Activated B cell treated with CpG ODN at 0.5 μM for 24 hours (primary cell): ENCODE measurements at regions of chr9 and their contacts with region 1.

Region 1: DNA sequence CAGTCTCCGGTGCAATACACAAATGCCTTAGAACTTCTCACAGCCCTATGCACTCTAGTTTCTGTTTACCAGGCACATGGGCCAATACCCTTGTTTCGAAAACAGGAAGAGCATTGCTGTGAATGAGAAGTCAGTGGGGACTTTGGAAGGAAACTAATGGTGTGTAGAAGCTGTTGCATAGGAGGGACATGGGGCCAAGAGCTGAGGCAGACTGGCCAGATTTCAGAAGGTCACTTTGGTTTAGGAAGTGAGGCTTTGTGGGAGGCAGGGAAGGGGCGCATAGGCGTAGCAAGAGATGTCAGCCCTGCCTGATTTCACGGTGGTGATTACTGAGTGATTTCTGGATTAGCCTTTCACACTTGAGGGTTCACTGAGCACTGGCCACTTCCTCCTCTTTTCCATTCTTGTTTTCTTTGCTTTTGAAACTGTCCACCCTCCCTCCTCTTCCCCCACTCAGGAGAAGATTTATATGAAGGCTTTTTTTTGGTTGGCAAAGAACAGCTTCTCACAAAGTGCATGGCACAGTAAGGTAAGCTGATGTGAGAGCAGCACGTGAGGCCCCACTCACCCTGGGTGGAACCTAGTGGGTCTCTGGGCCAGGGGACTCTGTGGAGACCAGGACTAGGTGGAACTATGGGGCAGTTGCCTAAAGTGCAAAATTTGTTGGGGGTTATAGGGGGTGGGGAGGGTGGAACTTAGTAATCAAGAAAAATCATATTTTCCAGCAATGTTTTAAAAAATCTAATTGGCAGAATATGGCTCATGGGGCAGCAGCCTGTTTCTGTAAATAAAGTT is 6.1 kb upstream of the TMEM252 start:
- DNase-seq: peak; percentile 20
- ATAC-seq: peak; percentile 83
- H3K4me3 Mint-ChIP-seq: peak overlapping the region; percentile 66
- H3K27ac Mint-ChIP-seq: peak overlapping the region; percentile 84
- H3K4me1 Mint-ChIP-seq: peaks cover 42% of the 10 kb centered on the region
- H3K27me3 Mint-ChIP-seq: no peaks in the 10 kb centered on the region
- CTCF ChIP-seq: no peak

Region 2: GRCh38 chr9:68507130-68507805 is 39.5 kb before region 1 on chr9:
- CTCF ChIA-PET with region 1: interaction called, 5 read pairs
- POLR2A ChIA-PET with region 1: no interaction called
- intact Hi-C with region 1: loop called (anchors 5 kb)
- DNase-seq: no peak
- ATAC-seq: no peak
- H3K4me3 Mint-ChIP-seq: no peak overlapping the region
- H3K27ac Mint-ChIP-seq: no peak overlapping the region
- H3K4me1 Mint-ChIP-seq: peaks cover 12% of the 10 kb centered on the region
- H3K27me3 Mint-ChIP-seq: no peaks in the 10 kb centered on the region
- CTCF ChIP-seq: no peak

Region 3: GRCh38 chr9:68530618-68531017 is 16.2 kb before region 1 on chr9:
- CTCF ChIA-PET with region 1: no interaction called
- POLR2A ChIA-PET with region 1: no interaction called
- intact Hi-C with region 1: loop called (anchors 2 kb)
- DNase-seq: no peak
- ATAC-seq: no peak
- H3K4me3 Mint-ChIP-seq: no peak overlapping the region
- H3K27ac Mint-ChIP-seq: no peak overlapping the region
- H3K4me1 Mint-ChIP-seq: no peaks in the 10 kb centered on the region
- H3K27me3 Mint-ChIP-seq: peaks cover 5% of the 10 kb centered on the region
- CTCF ChIP-seq: no peak

Region 4: DNA sequence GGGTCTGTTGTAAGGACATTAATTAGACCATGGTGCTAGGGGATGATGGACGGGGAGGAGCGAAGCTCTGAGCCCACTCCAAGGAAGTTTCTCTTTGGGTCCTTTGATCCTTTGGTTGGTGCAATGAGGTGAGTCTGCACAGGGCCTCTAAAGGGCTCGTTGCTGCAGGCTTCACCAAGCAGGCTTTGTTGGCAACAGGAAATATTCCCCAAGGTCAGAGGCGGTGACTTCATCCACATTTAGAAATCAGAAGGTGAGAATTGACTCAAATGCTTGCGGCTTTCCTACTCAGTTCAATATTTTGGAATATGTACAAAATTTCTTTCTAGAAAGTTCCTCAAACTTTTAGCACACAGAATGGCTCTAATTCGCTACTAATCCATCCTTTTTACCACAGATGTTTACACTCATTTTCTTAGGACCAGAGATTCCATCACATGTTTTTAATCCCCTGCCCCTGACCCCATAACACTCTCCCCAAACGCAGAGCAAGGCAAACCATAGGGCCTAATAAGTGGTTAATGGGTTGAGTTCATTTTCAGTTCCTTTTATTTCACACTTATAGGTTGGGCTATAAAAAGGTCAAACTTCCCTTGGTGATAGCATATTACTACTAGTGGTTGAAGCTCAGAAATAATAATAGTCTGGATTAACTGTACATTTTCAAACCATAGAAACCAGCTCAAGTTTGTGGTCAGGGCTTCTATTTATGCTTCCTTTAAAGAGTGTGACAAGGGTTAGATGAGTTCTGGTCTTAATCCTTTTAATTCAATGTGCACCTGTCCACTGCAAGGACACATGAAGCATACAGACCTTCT is 31.2 kb after region 1 on chr9:
- CTCF ChIA-PET with region 1: no interaction called
- POLR2A ChIA-PET with region 1: no interaction called
- intact Hi-C with region 1: loop called (anchors 1 kb)
- DNase-seq: no peak
- ATAC-seq: peak; percentile 88
- H3K4me3 Mint-ChIP-seq: peak overlapping the region; percentile 39
- H3K27ac Mint-ChIP-seq: no peak overlapping the region
- H3K4me1 Mint-ChIP-seq: peaks cover 28% of the 10 kb centered on the region
- H3K27me3 Mint-ChIP-seq: no peaks in the 10 kb centered on the region
- CTCF ChIP-seq: no peak

Region 5: GRCh38 chr9:68595868-68596267 is 49.1 kb after region 1 on chr9:
- CTCF ChIA-PET with region 1: no interaction called
- POLR2A ChIA-PET with region 1: no interaction called
- intact Hi-C with region 1: no loop called
- DNase-seq: no peak
- ATAC-seq: no peak
- H3K4me3 Mint-ChIP-seq: no peak overlapping the region
- H3K27ac Mint-ChIP-seq: no peak overlapping the region
- H3K4me1 Mint-ChIP-seq: peaks cover 60% of the 10 kb centered on the region
- H3K27me3 Mint-ChIP-seq: no peaks in the 10 kb centered on the region
- CTCF ChIP-seq: no peak

Region 6: DNA sequence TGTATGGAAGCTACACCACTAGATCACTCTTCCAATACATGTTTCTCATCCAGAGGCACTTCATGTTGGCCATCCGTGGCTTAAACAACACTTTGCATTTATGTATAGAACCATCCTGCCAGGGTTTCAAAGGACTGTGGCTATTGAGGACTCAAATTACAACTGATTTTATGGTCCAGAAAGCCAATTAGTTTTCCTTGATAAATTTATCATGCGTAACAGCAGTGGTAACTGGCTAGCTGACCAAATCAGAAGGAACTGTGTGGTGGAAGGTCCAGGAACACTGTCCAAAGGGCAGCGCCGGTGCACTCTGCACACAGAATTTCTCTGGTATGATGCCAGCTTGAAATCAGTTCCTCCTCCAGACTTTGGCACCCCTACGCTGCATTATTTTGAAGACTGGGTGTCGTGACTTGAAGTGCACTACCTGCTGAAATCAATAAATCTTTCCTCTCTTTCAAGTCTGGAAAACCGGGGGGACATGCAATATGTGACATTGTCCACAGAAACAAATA is 63.2 kb after region 1 on chr9:
- CTCF ChIA-PET with region 1: no interaction called
- POLR2A ChIA-PET with region 1: no interaction called
- intact Hi-C with region 1: no loop called
- DNase-seq: no peak
- ATAC-seq: no peak
- H3K4me3 Mint-ChIP-seq: no peak overlapping the region
- H3K27ac Mint-ChIP-seq: no peak overlapping the region
- H3K4me1 Mint-ChIP-seq: no peaks in the 10 kb centered on the region
- H3K27me3 Mint-ChIP-seq: no peaks in the 10 kb centered on the region
- CTCF ChIP-seq: no peak

Region 7: DNA sequence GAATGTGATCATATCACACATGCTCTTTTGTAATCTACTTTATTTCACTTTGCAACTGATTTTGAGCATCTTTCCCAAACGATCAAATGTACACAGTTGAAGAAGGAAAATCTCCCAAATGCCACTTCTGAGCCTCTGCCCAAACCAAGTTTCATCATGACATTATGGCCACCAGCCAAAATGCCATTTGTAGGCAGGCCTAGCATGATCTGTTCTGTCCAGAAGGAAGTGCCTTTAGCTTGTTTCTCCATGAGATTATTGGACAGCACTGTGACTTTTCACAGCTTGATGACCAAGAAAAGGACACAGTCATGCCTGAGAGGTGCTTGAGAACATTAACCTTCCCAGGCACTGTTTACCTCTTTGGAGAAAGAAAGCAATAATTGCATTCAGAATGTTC is 85.0 kb after region 1 on chr9:
- CTCF ChIA-PET with region 1: no interaction called
- POLR2A ChIA-PET with region 1: no interaction called
- intact Hi-C with region 1: no loop called
- DNase-seq: no peak
- ATAC-seq: no peak
- H3K4me3 Mint-ChIP-seq: no peak overlapping the region
- H3K27ac Mint-ChIP-seq: no peak overlapping the region
- H3K4me1 Mint-ChIP-seq: peaks cover 28% of the 10 kb centered on the region
- H3K27me3 Mint-ChIP-seq: no peaks in the 10 kb centered on the region
- CTCF ChIP-seq: no peak

Region 8: DNA sequence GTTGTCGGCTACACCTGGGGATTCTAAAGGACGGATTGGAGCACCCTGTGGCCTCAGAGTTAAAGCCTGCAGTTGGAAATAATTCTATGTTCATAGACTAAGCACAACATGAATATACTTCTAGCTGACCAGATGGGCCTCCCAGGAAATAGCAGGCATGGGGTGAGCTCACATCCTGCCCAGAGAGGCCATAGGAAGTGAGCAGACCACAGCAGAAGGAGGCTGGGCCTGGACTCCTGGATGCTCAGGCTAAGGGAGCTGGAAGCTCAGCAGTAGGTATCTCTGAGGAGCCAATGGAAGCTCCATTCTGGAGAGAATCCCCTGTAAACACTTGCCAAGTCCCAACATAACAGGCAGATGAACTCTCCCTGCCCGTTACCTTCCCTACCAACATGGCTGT is 800.2 kb after region 1 on chr9:
- CTCF ChIA-PET with region 1: no interaction called
- POLR2A ChIA-PET with region 1: no interaction called
- intact Hi-C with region 1: no loop called
- DNase-seq: no peak
- ATAC-seq: no peak
- H3K4me3 Mint-ChIP-seq: no peak overlapping the region
- H3K27ac Mint-ChIP-seq: no peak overlapping the region
- H3K4me1 Mint-ChIP-seq: no peaks in the 10 kb centered on the region
- H3K27me3 Mint-ChIP-seq: peaks cover 12% of the 10 kb centered on the region
- CTCF ChIP-seq: no peak